HEK293T (cell line): ENCODE measurements at regions of chr14 and their contacts with region 1.

Region 1: DNA sequence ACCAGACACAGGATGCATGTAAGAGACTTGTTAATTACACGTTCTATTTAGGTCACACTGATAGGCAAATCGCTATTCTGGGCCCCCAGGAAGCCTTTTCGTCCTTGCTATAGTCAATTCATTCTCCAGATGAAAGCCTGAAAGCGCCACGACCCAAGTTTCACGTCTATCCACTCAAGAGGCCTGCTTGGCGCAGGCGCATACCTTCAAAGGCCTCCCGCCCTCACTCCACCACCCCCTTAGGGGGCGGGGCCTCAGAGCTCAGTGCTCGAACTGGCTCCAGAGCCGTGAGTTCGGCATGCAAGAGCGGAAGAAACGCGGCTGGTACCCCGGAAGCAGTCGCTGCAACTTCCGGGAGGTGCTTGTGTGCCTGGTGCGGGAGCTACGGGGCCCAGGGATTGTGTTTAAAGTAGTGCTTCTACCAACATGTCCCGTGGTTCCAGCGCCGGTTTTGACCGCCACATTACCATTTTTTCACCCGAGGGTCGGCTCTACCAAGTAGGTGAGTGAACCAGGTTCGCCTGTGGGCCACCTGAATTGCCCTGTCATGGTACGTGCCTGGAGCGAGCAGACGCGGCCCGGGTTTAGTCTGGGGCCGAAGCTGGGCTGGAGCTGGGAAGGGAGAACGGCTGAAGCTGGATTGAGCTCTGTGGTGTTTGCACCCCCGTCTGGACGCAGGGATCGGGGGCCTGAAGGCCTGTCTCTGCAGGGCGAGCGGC is at the start of gene PSMA6:
- DNase-seq: peak; percentile 97

Region 2: DNA sequence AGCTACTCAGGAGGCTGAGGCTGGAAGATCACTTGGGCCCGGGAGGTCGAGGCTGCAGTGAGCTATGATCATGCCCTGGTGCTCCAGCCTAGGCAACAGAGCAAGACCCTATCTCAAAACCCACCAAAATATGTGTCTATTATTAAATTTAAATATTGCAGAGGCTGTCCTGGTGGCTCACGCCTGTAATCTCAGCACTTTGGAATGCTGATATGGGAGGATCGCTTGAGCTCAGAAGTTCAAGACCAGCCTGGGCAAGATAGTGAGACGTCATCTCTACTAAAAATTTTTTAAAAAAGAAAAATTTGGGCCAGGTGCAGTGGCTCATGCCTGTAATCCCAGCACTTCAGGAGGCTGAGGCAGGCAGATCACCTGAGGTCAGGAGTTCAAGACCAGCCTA is 13.9 kb after region 1 on chr14:
- CTCF ChIA-PET with region 1: no interaction called
- POLR2A ChIA-PET with region 1: interaction called, 13 read pairs
- DNase-seq: no peak

Region 3: DNA sequence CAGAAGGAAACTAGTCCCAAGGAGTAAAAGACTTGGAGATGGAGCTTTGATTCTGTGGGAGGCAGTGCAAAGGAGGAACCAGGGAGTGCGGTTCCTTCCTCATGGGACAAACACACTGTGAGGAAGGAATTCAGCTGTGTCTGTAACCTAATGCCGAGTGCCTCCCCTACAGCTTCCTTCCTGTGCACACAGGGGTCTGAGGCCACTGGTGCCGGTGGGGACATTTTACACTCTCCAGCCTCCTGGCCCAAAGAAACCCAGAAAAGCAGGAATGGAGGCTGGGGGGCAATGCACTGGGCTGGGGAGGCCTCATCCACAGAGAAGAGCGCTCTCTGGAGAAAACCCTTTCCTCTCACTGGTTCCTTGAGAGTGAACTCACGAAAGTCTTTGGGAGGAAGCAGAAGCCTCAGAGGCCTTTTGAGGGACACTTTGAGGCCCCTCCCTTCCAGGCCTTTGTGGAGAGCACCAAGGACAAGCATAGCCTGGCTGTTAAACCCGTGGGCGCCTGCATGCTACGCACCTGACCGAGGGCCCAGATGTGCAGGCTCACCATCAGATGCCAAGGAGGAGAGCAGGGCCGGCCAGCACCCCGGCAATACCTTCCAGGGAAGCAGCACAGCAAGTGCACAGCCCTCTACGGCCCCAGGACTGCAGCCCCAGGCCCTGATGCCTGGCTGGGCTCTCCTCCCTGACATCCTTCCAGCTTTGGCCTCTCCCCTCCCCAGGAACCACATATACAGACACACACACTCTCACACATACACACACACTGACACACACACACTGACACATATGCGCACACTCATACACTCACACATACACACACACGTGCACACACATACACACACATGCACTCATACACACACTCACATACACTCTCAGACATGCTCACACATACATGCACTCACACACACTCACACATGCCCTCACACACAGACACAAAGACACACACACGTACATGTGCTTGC is 60.3 kb after region 1 on chr14:
- CTCF ChIA-PET with region 1: no interaction called
- POLR2A ChIA-PET with region 1: interaction called, 11 read pairs
- DNase-seq: no peak